ENCODE measurements at regions of chr16 and their contacts with region 1.

Region 1: DNA sequence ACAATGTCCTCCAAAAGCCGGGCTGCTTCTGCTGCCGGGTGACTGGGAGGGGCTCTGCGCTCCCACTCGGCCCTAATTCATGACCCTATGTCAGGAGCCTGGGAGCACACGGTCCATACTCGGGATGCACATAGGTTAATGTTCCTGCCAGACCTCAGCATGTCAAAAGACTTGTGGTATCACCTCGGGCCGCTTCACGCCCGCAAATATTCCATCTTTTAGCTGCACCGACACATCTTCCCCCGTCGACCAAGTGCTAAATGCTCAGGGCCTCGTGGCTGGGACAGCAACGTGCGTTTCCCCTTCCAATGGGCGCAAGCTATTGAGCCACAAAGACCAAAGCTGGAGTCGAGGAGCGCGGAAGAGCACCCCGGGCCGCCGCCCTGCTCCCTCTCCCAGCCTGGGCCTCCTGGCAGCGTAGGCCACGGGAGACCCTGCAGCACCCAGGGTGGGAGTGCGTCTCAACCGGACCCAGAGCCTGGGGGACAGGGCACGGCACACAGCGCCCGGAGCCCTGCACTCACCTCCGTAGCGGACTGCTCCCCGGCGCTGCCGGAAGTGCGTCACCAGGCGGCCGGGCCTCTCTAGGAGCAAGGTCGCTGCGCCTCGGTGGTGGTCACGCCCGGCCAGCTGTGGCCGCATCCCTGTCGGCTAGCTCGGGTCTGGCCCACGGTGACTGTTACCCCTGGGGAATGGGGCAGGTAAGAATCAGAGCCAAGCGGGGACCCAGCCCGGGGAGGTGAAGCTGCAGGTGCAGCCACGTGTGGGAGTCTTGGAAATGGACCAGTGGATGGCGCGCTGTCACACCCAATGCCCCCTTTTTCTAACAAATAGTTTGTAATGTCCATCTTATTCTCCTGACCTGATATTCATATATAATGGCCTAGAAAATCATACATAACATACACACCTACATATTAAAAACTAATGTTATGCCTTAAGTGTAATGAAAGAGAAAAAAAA is at the start of gene ZNF23:
- DNase-seq: peak; percentile 90
- ATAC-seq: peak; percentile 97
- H3K4me3 Mint-ChIP-seq: peak within 1 kb of the TSS; percentile 93
- H3K27ac Mint-ChIP-seq: peak within 1 kb of the TSS; percentile 94
- H3K4me1 Mint-ChIP-seq: peaks cover 22% of the 10 kb centered on the region
- H3K27me3 Mint-ChIP-seq: no peaks in the 10 kb centered on the region
- CTCF ChIP-seq: no peak
- total RNA-seq, gene ZNF23: 13.3 and 14.6 TPM in 2 replicates

Region 2: GRCh38 chr16:71288890-71289733 is 172.9 kb before region 1 on chr16 and contains the start of gene CMTR2:
- CTCF ChIA-PET with region 1: no interaction called
- POLR2A ChIA-PET with region 1: interaction called, 12 read pairs
- intact Hi-C with region 1: loop called (anchors 1 kb)
- DNase-seq: peak; percentile 90
- ATAC-seq: peak; percentile 89
- H3K4me3 Mint-ChIP-seq: peak within 1 kb of the TSS; percentile 89
- H3K27ac Mint-ChIP-seq: peak within 1 kb of the TSS; percentile 94
- H3K4me1 Mint-ChIP-seq: peaks cover 29% of the 10 kb centered on the region
- H3K27me3 Mint-ChIP-seq: peaks cover 19% of the 10 kb centered on the region
- CTCF ChIP-seq: no peak
- total RNA-seq, gene CMTR2: 28.6 and 35.3 TPM in 2 replicates

Region 3: GRCh38 chr16:71358464-71358998 is 103.4 kb before region 1 on chr16 and contains the start of gene CALB2:
- CTCF ChIA-PET with region 1: no interaction called
- POLR2A ChIA-PET with region 1: no interaction called
- intact Hi-C with region 1: no loop called
- DNase-seq: peak; percentile 68
- ATAC-seq: peak; percentile 90
- H3K4me3 Mint-ChIP-seq: no peak within 1 kb of the TSS
- H3K27ac Mint-ChIP-seq: no peak within 1 kb of the TSS
- H3K4me1 Mint-ChIP-seq: peaks cover 3% of the 10 kb centered on the region
- H3K27me3 Mint-ChIP-seq: peaks cover 26% of the 10 kb centered on the region
- CTCF ChIP-seq: peak; percentile 52
- total RNA-seq, gene CALB2: not detected in 2 replicates

Region 4: DNA sequence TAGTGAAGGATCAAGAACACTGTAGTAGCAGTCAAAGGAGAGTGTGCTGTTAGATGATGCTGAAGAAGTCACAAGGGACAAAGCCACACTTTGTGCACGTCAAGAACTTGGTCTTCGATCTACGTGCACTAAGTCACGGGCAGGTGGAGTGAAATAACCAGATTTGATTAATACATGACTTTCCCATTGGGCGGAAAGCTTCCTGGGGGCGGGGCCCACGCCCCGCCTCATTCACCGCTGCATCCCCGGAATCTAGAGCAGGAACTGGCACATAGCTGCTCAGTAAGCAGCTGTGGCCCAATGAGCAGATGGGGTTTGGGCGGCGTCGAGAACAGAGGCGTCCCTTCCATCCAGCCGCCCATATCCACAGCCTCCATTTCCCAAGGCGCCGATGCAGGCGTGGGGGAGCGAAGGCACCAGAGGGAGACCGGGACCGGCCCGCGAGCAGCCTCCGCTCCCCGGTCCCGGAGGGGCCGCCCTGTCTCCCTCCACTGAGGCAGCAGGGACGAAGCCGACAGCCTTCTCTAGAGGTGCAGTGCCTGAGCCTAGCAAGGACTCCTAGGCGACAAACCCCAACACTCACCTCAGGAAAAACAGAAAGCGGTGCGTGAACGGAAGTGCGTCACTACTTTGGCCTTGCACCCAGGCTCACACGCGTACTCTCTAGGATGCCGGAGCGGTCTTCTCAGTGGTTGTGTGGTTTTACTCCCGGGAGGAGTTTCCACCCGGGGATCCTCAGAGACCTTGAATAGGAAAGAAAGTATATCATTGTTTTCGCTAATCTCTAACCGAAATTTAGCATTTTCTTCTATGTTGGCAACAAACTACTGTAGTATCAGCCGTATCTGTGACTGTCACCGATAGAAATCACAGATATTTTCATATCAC is 22.3 kb after region 1 on chr16:
- CTCF ChIA-PET with region 1: interaction called, 10 read pairs
- POLR2A ChIA-PET with region 1: interaction called, 94 read pairs
- intact Hi-C with region 1: loop called (anchors 1 kb)
- DNase-seq: peak; percentile 75
- ATAC-seq: peak; percentile 85
- H3K4me3 Mint-ChIP-seq: peak overlapping the region; percentile 89
- H3K27ac Mint-ChIP-seq: peak overlapping the region; percentile 92
- H3K4me1 Mint-ChIP-seq: peaks cover 17% of the 10 kb centered on the region
- H3K27me3 Mint-ChIP-seq: peaks cover 8% of the 10 kb centered on the region
- CTCF ChIP-seq: no peak

Region 5: GRCh38 chr16:71610936-71611871 is 149.2 kb after region 1 on chr16:
- CTCF ChIA-PET with region 1: interaction called, 30 read pairs
- POLR2A ChIA-PET with region 1: interaction called, 10 read pairs
- intact Hi-C with region 1: loop called (anchors 1 kb)
- DNase-seq: peak; percentile 83
- ATAC-seq: peak; percentile 76
- H3K4me3 Mint-ChIP-seq: peak overlapping the region; percentile 65
- H3K27ac Mint-ChIP-seq: no peak overlapping the region
- H3K4me1 Mint-ChIP-seq: peaks cover 33% of the 10 kb centered on the region
- H3K27me3 Mint-ChIP-seq: peaks cover 9% of the 10 kb centered on the region
- CTCF ChIP-seq: no peak

Region 6: DNA sequence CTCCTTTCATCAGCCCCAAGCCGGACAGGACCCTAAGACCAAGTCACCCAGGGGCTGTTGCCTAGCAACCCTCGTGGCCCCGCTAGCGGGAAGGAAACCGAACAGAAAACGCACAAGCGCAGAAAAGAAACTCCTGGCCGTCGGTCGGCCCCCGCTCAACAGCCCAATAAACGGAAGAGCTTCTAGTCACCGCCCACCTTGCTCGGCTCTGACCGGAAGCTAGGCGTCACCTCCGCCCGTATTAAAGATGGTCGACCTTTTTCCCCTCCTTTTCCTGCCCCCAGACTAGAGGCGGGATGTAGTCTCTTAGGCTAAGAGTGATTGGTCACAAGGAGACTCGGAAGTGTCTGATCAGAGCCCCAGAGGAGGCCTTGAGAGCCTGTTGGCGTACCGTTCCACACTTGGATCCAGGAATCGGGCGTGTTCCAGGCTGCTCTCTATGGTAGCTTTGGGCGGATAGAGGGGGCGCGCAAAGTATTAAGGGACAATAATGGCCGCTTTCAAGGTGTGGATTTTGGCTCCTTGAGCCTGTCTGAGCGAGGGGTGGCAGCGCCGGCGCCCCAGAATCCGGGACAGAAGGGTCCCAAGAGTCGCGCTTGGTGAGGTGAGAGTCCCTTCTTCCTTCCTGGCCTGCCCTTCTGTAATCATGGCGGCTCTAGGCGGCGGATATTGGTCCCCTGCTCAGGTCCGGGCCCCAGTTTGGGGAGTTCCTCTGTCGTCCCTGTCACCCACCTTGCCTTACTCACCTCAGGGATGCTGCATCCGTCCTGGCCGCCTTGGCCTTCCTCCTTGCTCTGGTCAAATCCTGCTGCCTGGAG is 631.7 kb after region 1 on chr16 and contains the starts of genes DHX38 and TXNL4B:
- CTCF ChIA-PET with region 1: no interaction called
- POLR2A ChIA-PET with region 1: interaction called, 4 read pairs
- intact Hi-C with region 1: loop called (anchors 10 kb)
- DNase-seq: peak; percentile 77
- ATAC-seq: peak; percentile 96
- H3K4me3 Mint-ChIP-seq: peak within 1 kb of the TSS; percentile 99
- H3K27ac Mint-ChIP-seq: peak within 1 kb of the TSS; percentile 96
- H3K4me1 Mint-ChIP-seq: peaks cover 47% of the 10 kb centered on the region
- H3K27me3 Mint-ChIP-seq: no peaks in the 10 kb centered on the region
- CTCF ChIP-seq: no peak
- total RNA-seq, gene DHX38: 107 and 118 TPM in 2 replicates
- total RNA-seq, gene TXNL4B: 13.1 and 13.8 TPM in 2 replicates